HepG2 (cell line): ENCODE measurements at regions of chr5 and their contacts with region 1.

Region 1: DNA sequence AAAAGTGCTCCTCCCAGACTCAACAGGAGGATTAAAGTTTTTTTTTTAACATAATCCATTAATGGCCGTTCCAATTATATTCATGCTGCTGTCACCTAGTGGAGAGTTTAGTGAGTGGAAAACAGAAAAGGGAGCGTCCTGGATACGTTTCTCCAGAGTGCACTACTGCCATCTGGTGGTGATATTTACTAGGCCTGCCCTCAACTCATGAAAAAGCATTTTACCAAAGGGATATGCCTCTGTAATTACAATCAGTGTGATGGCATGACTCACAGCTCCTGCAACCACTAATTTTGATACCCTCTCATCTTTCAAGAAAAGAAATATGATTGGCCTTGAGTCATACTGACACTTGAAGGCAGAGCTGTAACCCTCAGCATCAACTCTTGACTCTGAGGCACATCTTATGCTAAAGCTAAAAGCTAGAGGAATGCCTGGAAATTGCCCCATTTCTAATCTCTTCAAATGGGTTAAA is 20.0 kb downstream of the MINAR2 start:
- DNase-seq: peak; percentile 83
- ATAC-seq: peak; percentile 95
- H3K4me3 ChIP-seq: no peak overlapping the region
- H3K27ac ChIP-seq: no peak overlapping the region
- H3K4me1 ChIP-seq: no peaks in the 10 kb centered on the region
- H3K27me3 ChIP-seq: no peaks in the 10 kb centered on the region
- CTCF ChIP-seq: peak; percentile 91
- EP300 ChIP-seq: no peak
- POLR2A ChIP-seq: no peak
- RAD21 ChIP-seq: peak; percentile 52

Region 2: GRCh38 chr5:128722551-128722950 is 1045.4 kb before region 1 on chr5:
- CTCF ChIA-PET with region 1: no interaction called
- POLR2A ChIA-PET with region 1: no interaction called
- in situ Hi-C with region 1: no loop called
- intact Hi-C with region 1: no loop called
- DNase-seq: no peak
- ATAC-seq: no peak
- H3K4me3 ChIP-seq: no peak overlapping the region
- H3K27ac ChIP-seq: no peak overlapping the region
- H3K4me1 ChIP-seq: no peaks in the 10 kb centered on the region
- H3K27me3 ChIP-seq: no peaks in the 10 kb centered on the region
- CTCF ChIP-seq: no peak
- EP300 ChIP-seq: no peak
- POLR2A ChIP-seq: no peak
- RAD21 ChIP-seq: no peak

Region 3: GRCh38 chr5:128905571-128906110 is 862.3 kb before region 1 on chr5:
- CTCF ChIA-PET with region 1: interaction called, 3 read pairs
- POLR2A ChIA-PET with region 1: no interaction called
- in situ Hi-C with region 1: no loop called
- intact Hi-C with region 1: loop called (anchors 5 kb)
- DNase-seq: peak; percentile 34
- ATAC-seq: peak; percentile 83
- H3K4me3 ChIP-seq: no peak overlapping the region
- H3K27ac ChIP-seq: no peak overlapping the region
- H3K4me1 ChIP-seq: no peaks in the 10 kb centered on the region
- H3K27me3 ChIP-seq: no peaks in the 10 kb centered on the region
- CTCF ChIP-seq: peak; percentile 73
- EP300 ChIP-seq: no peak
- POLR2A ChIP-seq: no peak
- RAD21 ChIP-seq: peak; percentile 41; the same call in 1 of the 2 replicates

Region 4: DNA sequence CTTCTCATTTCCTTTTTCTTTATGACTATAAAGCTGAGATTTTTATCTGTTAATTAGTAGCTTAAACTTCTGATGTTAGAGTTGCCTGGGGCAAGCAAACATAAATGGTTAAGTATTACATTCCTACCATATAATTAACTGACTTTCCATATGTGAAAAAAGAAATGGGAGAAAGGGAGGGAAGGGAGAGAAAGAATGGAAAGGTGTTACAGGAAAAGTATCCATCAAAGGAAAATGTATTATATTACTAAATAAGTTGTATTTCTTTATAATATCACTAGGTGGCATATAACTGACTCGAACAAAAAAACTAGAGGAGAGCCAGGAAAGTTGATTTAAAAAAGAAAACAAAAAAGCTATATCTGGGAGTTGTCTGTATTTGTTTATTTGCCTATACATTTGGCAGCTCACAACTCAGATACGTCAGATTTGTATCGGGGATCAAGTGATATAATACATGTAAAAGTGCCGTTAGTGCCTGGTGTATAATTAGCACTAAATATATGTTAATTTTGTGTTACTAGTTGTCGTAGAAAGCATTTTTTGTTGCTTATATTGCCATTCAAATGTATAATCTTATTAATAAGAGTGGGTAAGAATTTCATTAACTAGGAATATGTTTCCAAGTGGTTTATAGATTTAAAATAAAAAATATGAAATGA is 367.5 kb before region 1 on chr5:
- CTCF ChIA-PET with region 1: no interaction called
- POLR2A ChIA-PET with region 1: no interaction called
- in situ Hi-C with region 1: no loop called
- intact Hi-C with region 1: loop called (anchors 2 kb)
- DNase-seq: no peak
- ATAC-seq: no peak
- H3K4me3 ChIP-seq: no peak overlapping the region
- H3K27ac ChIP-seq: no peak overlapping the region
- H3K4me1 ChIP-seq: no peaks in the 10 kb centered on the region
- H3K27me3 ChIP-seq: no peaks in the 10 kb centered on the region
- CTCF ChIP-seq: no peak
- EP300 ChIP-seq: no peak
- POLR2A ChIP-seq: no peak
- RAD21 ChIP-seq: no peak

Region 5: DNA sequence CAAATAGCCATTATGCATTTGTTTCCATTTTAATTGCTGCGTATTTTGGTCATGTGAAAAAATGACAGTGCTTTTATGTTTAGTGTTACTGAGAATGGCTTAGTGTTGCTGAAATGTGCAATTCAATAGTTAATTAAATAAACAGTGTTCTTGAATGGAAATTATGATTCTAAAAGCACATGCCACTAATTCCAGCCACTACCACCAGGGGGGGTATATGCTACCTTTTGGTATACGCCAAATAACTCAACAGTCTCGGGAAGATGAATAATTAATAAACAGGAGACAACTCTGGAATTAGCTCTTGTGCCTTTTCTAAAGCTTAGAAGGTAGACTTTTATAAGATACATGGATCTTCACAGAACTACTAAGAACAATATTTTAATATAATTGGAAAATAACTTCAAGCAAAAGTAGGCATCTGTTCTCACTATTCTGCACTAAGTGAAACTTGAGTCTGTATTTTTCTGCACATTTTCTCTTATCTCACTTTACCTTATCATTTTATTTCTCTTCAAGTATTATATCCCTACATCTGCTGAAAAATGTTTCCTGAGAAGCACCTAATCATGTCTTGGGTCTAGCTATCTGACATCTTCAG is 103.5 kb before region 1 on chr5:
- CTCF ChIA-PET with region 1: interaction called, 28 read pairs
- POLR2A ChIA-PET with region 1: no interaction called
- in situ Hi-C with region 1: loop called (anchors 10 kb)
- intact Hi-C with region 1: loop called (anchors 1 kb)
- DNase-seq: peak; percentile 17
- ATAC-seq: no peak
- H3K4me3 ChIP-seq: no peak overlapping the region
- H3K27ac ChIP-seq: no peak overlapping the region
- H3K4me1 ChIP-seq: no peaks in the 10 kb centered on the region
- H3K27me3 ChIP-seq: no peaks in the 10 kb centered on the region
- CTCF ChIP-seq: peak; percentile 52
- EP300 ChIP-seq: no peak
- POLR2A ChIP-seq: no peak
- RAD21 ChIP-seq: no peak

Region 6: GRCh38 chr5:129836321-129836720 is 68.4 kb after region 1 on chr5:
- CTCF ChIA-PET with region 1: no interaction called
- POLR2A ChIA-PET with region 1: no interaction called
- in situ Hi-C with region 1: no loop called
- intact Hi-C with region 1: no loop called
- DNase-seq: no peak
- ATAC-seq: no peak
- H3K4me3 ChIP-seq: no peak overlapping the region
- H3K27ac ChIP-seq: no peak overlapping the region
- H3K4me1 ChIP-seq: no peaks in the 10 kb centered on the region
- H3K27me3 ChIP-seq: no peaks in the 10 kb centered on the region
- CTCF ChIP-seq: no peak
- EP300 ChIP-seq: no peak
- POLR2A ChIP-seq: no peak
- RAD21 ChIP-seq: no peak

Region 7: DNA sequence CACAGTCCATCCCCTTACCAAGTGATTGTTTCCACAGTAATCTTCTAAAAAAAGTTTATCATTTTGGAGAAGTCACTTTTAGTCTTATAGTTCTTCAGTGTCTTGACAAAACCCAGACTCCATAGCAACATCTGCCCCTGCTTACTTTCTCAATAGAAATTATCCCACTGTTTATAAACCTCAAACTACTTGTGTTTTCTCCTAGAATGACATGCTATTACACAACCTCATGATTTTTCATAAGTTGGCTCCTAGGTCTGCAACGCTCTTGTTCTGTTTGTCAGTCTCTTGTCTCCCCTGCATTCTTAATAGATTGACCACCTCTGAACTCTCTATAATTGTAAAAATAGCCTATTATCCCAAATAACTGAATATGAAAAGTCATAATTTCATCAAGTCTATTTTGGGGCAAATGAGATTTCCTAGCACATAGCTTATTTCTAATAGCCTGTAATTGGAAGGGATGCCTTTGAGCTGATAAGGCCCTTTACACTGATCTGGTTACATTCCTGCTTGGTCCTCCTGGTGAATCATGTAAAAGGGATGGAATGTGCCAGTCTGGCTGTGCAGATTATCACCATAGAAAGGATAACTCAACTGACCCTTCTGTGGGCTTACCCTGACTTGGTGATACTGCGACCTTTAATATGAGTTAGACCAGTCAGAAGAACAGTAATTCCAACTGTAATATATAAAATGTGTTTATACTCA is 205.9 kb after region 1 on chr5:
- CTCF ChIA-PET with region 1: no interaction called
- POLR2A ChIA-PET with region 1: no interaction called
- in situ Hi-C with region 1: no loop called
- intact Hi-C with region 1: no loop called
- DNase-seq: no peak
- ATAC-seq: no peak
- H3K4me3 ChIP-seq: no peak overlapping the region
- H3K27ac ChIP-seq: no peak overlapping the region
- H3K4me1 ChIP-seq: no peaks in the 10 kb centered on the region
- H3K27me3 ChIP-seq: no peaks in the 10 kb centered on the region
- CTCF ChIP-seq: no peak
- EP300 ChIP-seq: no peak
- POLR2A ChIP-seq: no peak
- RAD21 ChIP-seq: no peak

Region 8: DNA sequence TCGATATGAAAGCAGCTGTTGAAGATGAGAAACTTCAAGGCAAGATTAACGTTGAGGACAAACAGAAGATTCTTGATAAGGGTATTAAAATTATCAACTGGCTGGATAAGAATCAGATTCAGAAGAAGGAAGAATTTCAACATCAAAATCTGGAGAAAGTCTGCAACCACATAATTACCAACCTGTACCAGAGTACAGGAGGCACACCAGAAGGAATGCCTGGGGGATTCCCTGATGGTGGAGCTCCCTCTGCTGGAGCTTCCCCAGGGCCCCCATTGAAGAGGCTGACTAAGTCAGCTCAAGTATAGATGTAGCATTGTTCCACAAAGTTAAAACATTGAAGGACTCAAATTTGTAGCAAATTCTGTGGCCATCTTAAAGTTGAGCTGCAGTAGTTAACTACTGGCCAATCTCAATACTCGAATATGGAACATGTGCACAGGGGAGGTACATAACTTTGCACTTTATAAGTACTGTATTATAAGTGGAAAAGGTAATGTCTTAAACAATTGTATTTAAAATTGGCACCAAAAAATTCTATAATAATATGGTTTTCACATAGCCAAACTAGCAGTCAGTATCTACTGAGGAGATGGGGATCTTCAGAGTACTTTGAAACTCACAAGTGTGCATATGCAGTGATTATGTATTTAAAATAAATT is 373.8 kb after region 1 on chr5:
- CTCF ChIA-PET with region 1: no interaction called
- POLR2A ChIA-PET with region 1: no interaction called
- in situ Hi-C with region 1: no loop called
- intact Hi-C with region 1: loop called (anchors 1 kb)
- DNase-seq: no peak
- ATAC-seq: peak; percentile 73; the same call in 2 of the 3 replicates
- H3K4me3 ChIP-seq: no peak overlapping the region
- H3K27ac ChIP-seq: no peak overlapping the region
- H3K4me1 ChIP-seq: no peaks in the 10 kb centered on the region
- H3K27me3 ChIP-seq: no peaks in the 10 kb centered on the region
- CTCF ChIP-seq: peak; percentile 36
- EP300 ChIP-seq: no peak
- POLR2A ChIP-seq: no peak
- RAD21 ChIP-seq: no peak